GM13977 (cell line): ENCODE measurements at regions of chr18 and their contacts with region 1.

Region 1: DNA sequence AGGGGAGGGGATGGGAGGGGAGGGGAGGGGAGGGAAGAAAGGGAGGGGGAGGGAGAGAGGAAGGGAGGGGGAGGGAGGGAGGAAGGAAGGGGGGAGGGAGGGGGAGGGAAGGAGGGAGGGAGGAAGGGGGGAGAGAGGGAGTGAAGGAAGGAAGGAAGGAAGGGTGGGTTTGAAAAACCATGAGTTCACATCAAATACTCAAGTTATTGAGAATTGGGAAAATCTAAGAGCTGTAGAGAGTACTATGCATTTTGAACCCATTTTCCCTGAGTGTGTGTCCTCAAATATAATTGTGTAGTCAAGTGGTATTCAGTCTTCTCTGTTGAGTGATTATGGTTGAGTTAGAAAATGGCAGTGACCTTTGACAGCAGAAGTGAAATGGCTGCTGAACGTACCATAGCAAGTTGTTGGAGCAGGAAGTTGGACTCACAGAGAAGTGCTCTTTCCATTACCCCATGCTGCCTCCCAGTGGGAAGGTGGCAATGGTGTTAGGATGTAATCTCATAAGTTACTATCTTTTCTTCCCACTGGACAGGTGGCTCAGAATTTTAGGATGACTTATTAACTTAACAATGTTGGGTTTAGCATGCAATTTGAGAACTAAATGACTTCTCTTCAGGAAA is 214.6 kb downstream of the SETBP1 start:
- DNase-seq: peak; percentile 9
- CTCF ChIP-seq: peak; percentile 44

Region 2: GRCh38 chr18:43013486-43013885 is 1881.8 kb before region 1 on chr18:
- in situ Hi-C with region 1: no loop called
- DNase-seq: no peak
- CTCF ChIP-seq: no peak

Region 3: GRCh38 chr18:44679056-44679905 is 216.0 kb before region 1 on chr18:
- in situ Hi-C with region 1: loop called (anchors 10 kb)
- DNase-seq: peak; percentile 93
- CTCF ChIP-seq: peak; percentile 88

Region 4: GRCh38 chr18:45540125-45540524 is 644.8 kb after region 1 on chr18:
- in situ Hi-C with region 1: no loop called
- DNase-seq: no peak
- CTCF ChIP-seq: no peak